ENCODE measurements at regions of chr15 and their contacts with region 1.

Region 1: GRCh38 chr15:45611305-45611704 is 23.5 kb upstream of the SQOR start:
- DNase-seq: no peak
- H3K4me3 ChIP-seq: no peak overlapping the region
- H3K27me3 ChIP-seq: no peaks in the 10 kb centered on the region
- CTCF ChIP-seq: peak; percentile 57

Region 2: DNA sequence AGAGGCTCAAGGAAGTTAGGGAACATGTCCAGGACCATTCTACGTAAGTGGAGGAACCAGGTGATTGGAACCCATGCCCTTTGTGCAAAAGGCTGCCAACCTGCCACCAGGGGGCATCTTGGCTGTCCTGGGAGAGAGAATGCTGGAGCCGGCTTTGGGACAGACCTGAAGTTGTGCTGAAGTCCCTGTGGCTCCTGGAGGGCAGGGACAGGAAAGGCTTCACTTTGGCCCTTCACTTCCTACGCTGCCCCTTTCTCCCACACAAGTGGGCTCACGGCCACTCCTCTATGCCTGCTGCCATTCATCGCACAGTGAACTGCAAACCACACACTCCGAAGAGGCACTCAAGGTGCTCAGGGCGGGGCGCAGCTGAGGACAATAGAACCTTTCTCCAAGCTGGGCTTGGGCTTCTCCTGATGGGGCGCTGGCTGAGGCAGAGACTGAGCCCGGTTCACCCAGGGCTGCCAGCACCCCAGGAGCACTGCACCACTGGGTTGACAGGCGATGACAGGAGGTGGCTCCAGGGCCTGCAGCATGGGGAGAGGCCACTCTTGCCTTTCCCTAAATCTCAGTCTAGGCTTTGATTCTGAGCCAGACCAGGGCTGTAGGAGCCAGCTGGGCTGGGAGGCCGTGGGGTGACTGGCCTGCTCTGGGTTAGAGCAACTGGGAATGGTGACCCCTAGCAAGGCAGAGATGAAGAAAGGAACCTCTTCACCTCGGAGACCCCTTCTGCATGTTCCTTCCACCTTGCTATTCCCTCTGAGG is 431.9 kb before region 1 on chr15:
- CTCF ChIA-PET with region 1: no interaction called
- POLR2A ChIA-PET with region 1: no interaction called
- DNase-seq: no peak
- H3K4me3 ChIP-seq: no peak overlapping the region
- H3K27me3 ChIP-seq: no peaks in the 10 kb centered on the region
- CTCF ChIP-seq: peak; percentile 48

Region 3: GRCh38 chr15:45429974-45430792 is 181.1 kb before region 1 on chr15:
- CTCF ChIA-PET with region 1: interaction called, 47 read pairs
- POLR2A ChIA-PET with region 1: no interaction called
- DNase-seq: no peak
- H3K4me3 ChIP-seq: peak overlapping the region; percentile 36
- H3K27me3 ChIP-seq: no peaks in the 10 kb centered on the region
- CTCF ChIP-seq: peak; percentile 99

Region 4: DNA sequence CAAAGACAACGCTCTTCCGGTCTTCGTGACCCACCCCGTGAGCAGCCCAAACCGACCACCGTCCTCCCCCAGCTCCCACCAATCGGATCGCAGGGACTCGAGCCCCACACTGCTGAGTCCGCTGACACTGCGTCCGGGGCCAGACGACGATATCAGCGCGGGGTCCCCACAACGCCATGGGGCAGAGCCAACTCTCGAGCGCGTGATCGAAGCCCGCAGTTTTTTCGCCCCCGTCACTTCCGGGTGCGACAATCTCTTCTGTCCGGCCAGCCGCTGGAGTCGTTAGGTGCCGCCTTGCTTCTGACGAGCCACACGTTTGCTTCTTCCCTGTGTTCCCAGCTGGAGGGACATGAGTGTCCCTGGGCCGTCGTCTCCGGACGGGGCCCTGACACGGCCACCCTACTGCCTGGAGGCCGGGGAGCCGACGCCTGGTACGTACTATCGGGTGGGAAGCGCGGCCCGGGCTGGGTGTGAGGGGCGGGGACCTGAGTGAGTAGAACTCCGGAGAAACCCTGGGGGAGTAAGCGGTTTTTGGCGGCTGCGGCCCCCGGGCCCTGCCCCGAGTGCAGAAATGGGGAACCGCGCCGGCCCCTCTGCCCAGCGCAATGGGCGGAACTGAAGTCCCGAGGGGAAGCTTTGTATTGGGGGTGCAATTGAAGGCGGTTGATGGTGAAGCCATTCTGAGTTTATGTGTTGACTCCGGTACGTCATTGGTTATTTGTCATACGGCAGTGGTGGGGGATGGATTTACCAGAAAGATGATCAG is 24.0 kb before region 1 on chr15 and contains the start of gene BLOC1S6:
- CTCF ChIA-PET with region 1: interaction called, 20 read pairs
- POLR2A ChIA-PET with region 1: no interaction called
- DNase-seq: peak; percentile 44
- H3K4me3 ChIP-seq: peak within 1 kb of the TSS; percentile 76
- H3K27me3 ChIP-seq: no peaks in the 10 kb centered on the region
- CTCF ChIP-seq: no peak
- polyA plus RNA-seq, gene BLOC1S6: 12.4 and 18.8 TPM in 2 replicates

Region 5: DNA sequence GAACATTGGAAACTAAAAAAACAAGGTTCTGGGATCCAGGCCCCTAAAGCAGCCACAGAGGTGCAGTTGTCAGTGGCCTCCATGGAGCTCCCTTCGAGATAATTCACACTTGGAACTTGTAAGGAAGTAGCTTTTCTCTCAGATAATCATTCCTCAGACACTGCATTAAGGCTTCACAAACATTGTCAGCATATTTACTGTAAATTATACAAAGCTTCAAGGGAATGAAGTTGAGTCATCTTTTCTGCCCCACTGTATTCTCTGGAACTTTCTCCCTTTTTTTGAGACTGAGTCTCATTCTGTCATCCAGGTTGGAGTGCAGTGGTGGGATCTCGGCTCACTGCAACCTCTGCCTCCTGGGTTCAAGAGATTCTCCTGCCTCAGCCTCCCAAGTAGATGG is 17.0 kb before region 1 on chr15:
- CTCF ChIA-PET with region 1: interaction called, 12 read pairs
- POLR2A ChIA-PET with region 1: no interaction called
- DNase-seq: no peak
- H3K4me3 ChIP-seq: no peak overlapping the region
- H3K27me3 ChIP-seq: no peaks in the 10 kb centered on the region
- CTCF ChIP-seq: no peak

Region 6: GRCh38 chr15:46251903-46252302 is 640.6 kb after region 1 on chr15:
- CTCF ChIA-PET with region 1: no interaction called
- POLR2A ChIA-PET with region 1: no interaction called
- DNase-seq: no peak
- H3K4me3 ChIP-seq: no peak overlapping the region
- H3K27me3 ChIP-seq: no peaks in the 10 kb centered on the region
- CTCF ChIP-seq: no peak

Region 7: GRCh38 chr15:46961795-46962194 is 1350.5 kb after region 1 on chr15:
- CTCF ChIA-PET with region 1: no interaction called
- POLR2A ChIA-PET with region 1: no interaction called
- DNase-seq: no peak
- H3K4me3 ChIP-seq: no peak overlapping the region
- H3K27me3 ChIP-seq: no peaks in the 10 kb centered on the region
- CTCF ChIP-seq: no peak